Naive thymus-derived CD4-positive, alpha-beta T cell (primary cell): ENCODE measurements at regions of chr22 and their contacts with region 1.

Region 1: GRCh38 chr22:20418211-20418788 is 19.3 kb downstream of the SCARF2 start:
- DNase-seq: peak; percentile 53 to 78 (median 68)
- ATAC-seq: peak; percentile 92
- H3K4me3 ChIP-seq: peak overlapping the region; percentile 56
- H3K4me3 Mint-ChIP-seq: peak overlapping the region in 9 of 10 donors; percentile 20 to 77 (median 57)
- H3K27ac ChIP-seq: no peak overlapping the region
- H3K27ac Mint-ChIP-seq: peak overlapping the region in 1 of 9 donors; percentile 43
- H3K4me1 ChIP-seq: peaks cover 0 to 6% of the 10 kb centered on the region in 2 donors
- H3K4me1 Mint-ChIP-seq: peaks cover 0 to 8% (median 0%) of the 10 kb centered on the region in 7 donors
- H3K27me3 ChIP-seq: no peaks in the 10 kb centered on the region
- H3K27me3 Mint-ChIP-seq: peaks cover 0 to 22% (median 0%) of the 10 kb centered on the region in 5 donors

Region 2: GRCh38 chr22:20156611-20157429 is 261.5 kb before region 1 on chr22:
- CTCF ChIA-PET with region 1: no interaction called
- POLR2A ChIA-PET with region 1: no interaction called
- intact Hi-C with region 1: loop called in 1 of 2 experiments (anchors 1 kb)
- DNase-seq: peak; percentile 70 to 92 (median 80)
- ATAC-seq: peak; percentile 89
- H3K4me3 ChIP-seq: no peak overlapping the region
- H3K4me3 Mint-ChIP-seq: no peak overlapping the region
- H3K27ac ChIP-seq: no peak overlapping the region
- H3K27ac Mint-ChIP-seq: no peak overlapping the region
- H3K4me1 ChIP-seq: no peaks in the 10 kb centered on the region
- H3K4me1 Mint-ChIP-seq: peaks cover 0 to 4% (median 0%) of the 10 kb centered on the region in 7 donors
- H3K27me3 ChIP-seq: no peaks in the 10 kb centered on the region
- H3K27me3 Mint-ChIP-seq: peaks cover 0 to 7% (median 0%) of the 10 kb centered on the region in 5 donors

Region 3: GRCh38 chr22:20456064-20456721 is 37.9 kb after region 1 on chr22:
- CTCF ChIA-PET with region 1: interaction called, 55 read pairs
- POLR2A ChIA-PET with region 1: interaction called, 11 read pairs
- intact Hi-C with region 1: loop called (anchors 1 kb)
- DNase-seq: peak; percentile 54 to 82 (median 72)
- ATAC-seq: peak; percentile 98
- H3K4me3 ChIP-seq: no peak overlapping the region
- H3K4me3 Mint-ChIP-seq: peak overlapping the region in 4 of 10 donors; percentile 20 to 36 (median 26)
- H3K27ac ChIP-seq: no peak overlapping the region
- H3K27ac Mint-ChIP-seq: peak overlapping the region in 5 of 9 donors; percentile 25 to 75 (median 51)
- H3K4me1 ChIP-seq: peaks cover 8 to 16% of the 10 kb centered on the region in 2 donors
- H3K4me1 Mint-ChIP-seq: peaks cover 13 to 40% (median 34%) of the 10 kb centered on the region in 7 donors
- H3K27me3 ChIP-seq: no peaks in the 10 kb centered on the region
- H3K27me3 Mint-ChIP-seq: no peaks in the 10 kb centered on the region

Region 4: DNA sequence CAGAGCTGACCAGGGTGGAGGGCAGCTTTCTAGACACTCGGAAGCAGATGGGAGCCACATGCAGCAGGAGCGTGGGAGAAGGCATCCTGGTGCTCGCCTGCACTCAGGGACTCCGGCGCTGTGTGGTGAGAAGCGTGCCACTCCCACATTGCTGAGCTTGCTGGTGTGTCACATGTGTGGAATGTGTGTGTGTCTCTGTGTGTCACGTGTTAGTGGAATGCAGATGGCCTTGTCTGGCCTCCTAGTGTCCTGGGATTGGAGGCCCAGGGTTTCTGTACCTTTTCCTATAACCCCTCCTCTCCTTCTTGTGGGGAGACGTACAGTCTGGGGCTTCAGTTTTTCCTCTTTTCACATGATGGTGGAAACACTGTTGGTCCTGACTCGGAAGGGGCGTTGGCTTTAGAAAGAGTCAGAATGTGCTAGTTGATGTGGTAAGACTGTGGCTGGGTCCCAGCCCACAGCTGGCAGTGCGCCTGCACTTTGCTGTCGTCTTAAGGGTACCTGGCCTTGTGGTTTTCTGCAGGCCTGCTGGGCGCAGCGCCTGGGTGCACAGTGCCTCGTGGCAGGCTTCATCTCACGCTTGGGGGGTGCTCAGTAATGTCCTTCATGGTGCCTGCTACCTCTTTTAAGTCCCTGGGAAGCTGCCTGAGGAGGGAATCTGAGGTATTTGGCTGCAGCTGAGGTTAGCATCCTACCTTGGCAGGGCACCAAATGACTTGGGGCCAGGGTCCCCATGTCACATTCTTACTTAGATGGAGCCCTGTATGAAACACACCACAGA is 150.9 kb after region 1 on chr22:
- CTCF ChIA-PET with region 1: interaction called, 3 read pairs
- POLR2A ChIA-PET with region 1: interaction called, 4 read pairs
- intact Hi-C with region 1: loop called (anchors 1 to 5 kb)
- DNase-seq: peak; percentile 56 to 91 (median 88)
- ATAC-seq: peak; percentile 82
- H3K4me3 ChIP-seq: peak overlapping the region; percentile 39
- H3K4me3 Mint-ChIP-seq: peak overlapping the region; percentile 79 to 88 (median 84)
- H3K27ac ChIP-seq: peak overlapping the region; percentile 46
- H3K27ac Mint-ChIP-seq: peak overlapping the region; percentile 92 to 99 (median 93)
- H3K4me1 ChIP-seq: peaks cover 76 to 81% of the 10 kb centered on the region in 2 donors
- H3K4me1 Mint-ChIP-seq: peaks cover 59 to 96% (median 80%) of the 10 kb centered on the region in 7 donors
- H3K27me3 ChIP-seq: no peaks in the 10 kb centered on the region
- H3K27me3 Mint-ChIP-seq: no peaks in the 10 kb centered on the region

Region 5: DNA sequence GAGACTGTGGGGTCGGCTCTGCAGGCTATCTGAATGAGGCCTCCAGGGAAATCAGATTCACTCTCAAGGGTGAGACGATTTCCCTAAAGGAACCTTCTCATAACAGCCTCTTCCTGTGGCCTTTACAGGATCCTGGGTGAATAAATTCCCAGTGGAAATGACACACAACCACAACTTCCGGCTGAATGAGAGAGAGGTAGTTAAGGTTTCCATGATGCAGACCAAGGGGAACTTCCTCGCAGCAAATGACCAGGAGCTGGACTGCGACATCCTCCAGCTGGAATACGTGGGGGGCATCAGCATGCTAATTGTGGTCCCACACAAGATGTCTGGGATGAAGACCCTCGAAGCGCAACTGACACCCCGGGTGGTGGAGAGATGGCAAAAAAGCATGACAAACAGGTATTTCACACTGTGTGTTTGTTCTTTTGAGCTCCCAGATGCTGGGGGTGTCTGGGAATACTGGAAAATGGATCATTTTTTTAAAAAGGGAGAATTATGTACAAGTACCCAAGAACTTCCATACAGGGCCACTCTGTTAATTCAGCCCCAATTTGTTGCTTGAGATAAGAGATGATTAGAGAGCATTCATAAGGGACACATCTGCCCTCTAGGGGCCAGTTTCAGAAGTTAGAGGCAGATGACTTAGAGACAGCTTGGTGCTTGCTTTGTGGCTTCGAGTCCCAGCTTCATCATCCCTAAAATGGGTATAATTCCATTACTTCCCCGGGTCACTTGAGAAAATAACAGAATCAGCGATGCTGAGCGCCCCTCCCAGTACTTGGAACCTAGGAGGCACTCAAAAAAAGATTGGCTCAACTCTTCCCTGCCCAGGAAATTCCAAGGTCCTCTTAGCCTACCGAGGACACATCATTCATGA is 365.8 kb after region 1 on chr22:
- CTCF ChIA-PET with region 1: interaction called, 3 read pairs
- POLR2A ChIA-PET with region 1: no interaction called
- intact Hi-C with region 1: loop called in 1 of 2 experiments (anchors 1 kb)
- DNase-seq: peak in 8 of 9 donors; percentile 1 to 52 (median 32)
- ATAC-seq: peak; percentile 69
- H3K4me3 ChIP-seq: no peak overlapping the region
- H3K4me3 Mint-ChIP-seq: no peak overlapping the region
- H3K27ac ChIP-seq: no peak overlapping the region
- H3K27ac Mint-ChIP-seq: peak overlapping the region in 3 of 9 donors; percentile 20 to 37 (median 25)
- H3K4me1 ChIP-seq: no peaks in the 10 kb centered on the region
- H3K4me1 Mint-ChIP-seq: peaks cover 0 to 10% (median 0%) of the 10 kb centered on the region in 7 donors
- H3K27me3 ChIP-seq: no peaks in the 10 kb centered on the region
- H3K27me3 Mint-ChIP-seq: no peaks in the 10 kb centered on the region